ENCODE measurements at regions of chr9 and their contacts with region 1.

Region 1: GRCh38 chr9:133103987-133104505 is 17.0 kb downstream of the RALGDS start:
- DNase-seq: no peak
- H3K4me3 ChIP-seq: no peak overlapping the region
- H3K27ac ChIP-seq: no peak overlapping the region
- H3K4me1 ChIP-seq: peaks cover 17% of the 10 kb centered on the region
- H3K27me3 ChIP-seq: no peaks in the 10 kb centered on the region
- CTCF ChIP-seq: no peak

Region 2: DNA sequence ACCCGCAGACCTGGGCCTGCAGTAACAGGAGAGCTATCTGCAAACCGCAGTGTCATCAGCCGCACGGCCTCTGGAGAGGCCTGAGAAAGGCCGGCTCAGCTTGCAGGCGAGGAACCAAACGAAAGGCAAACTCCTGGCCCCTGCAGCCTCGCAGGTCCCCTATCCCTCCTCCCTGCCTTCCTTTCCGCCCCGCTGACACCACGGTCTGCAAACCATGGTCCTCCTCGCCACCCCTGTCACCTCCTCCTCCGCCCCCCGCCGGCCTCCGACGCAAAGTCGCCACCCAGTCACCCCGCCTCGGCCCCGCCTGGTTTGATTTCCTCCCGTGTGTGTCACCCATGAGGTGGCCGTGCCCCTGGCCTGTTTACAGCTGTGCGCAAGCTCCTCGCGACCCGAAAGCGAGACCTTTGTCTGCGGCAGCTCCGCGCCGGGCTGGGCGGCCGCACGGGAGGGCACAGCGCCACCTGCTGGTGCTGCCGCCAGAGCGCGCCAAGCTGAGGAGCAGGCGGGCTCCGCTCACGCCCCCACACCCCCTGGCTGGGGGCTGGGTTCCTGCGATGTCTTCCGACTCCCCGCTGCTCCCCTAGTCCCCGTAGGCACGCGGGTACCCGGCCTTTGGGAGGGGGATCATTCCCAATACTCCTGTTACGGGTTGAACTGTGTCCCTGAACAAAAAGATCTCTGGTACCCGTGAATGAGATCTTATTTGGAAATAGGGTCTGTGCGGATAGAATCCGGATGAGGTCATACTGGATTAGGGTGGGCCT is 40.3 kb after region 1 on chr9:
- intact Hi-C with region 1: loop called (anchors 2 kb)
- DNase-seq: peak; percentile 56
- H3K4me3 ChIP-seq: peak overlapping the region; percentile 59
- H3K27ac ChIP-seq: peak overlapping the region; percentile 60
- H3K4me1 ChIP-seq: peaks cover 82% of the 10 kb centered on the region
- H3K27me3 ChIP-seq: no peaks in the 10 kb centered on the region
- CTCF ChIP-seq: peak; percentile 99

Measured in left ventricle myocardium inferior (tissue), 1 donor.